Activated CD8-positive, alpha-beta memory T cell treated with anti-CD3 and anti-CD28 coated beads, Interleukin-2, amount 10 ng/mL, durations not matched to agents 7 days and 5 days (primary cell): ENCODE measurements at regions of chr2 and their contacts with region 1.

Region 1: DNA sequence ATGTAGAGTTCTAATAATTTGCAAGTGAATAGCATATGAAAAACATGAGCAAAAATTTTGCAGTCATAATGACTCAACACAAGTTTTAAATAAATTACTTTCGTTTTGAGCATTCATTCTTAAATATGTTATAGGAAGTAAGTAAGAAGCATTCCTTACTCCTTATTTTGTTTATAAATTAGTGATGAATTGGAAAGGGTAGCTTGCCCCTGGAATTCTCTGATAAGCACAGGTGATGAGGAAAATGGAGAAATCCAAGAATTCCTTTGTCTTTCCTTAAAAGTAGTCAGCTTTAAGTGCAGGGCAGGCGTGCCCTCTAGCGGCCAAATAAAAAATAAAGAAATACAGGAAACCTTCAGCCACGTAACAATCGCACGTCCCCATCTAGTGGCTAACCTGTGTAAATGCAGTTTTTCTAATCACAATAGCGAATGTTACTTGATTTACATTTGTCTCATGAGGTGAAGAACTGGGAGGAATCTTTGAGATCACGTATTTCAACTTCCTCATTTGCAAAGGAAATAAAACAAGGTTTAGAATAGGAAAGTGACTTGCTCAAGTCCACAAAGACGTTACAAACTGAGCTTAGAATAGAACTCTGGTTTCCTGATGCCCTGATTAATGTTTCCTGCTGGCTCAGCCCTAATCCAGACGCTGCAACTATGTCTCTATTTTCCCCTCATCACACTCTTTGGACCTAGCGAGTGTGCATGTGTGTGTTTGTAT is 47.2 kb upstream of the ZNG1B start:
- DNase-seq: peak; percentile 74
- ATAC-seq: peak; percentile 92
- H3K4me3 Mint-ChIP-seq: peak overlapping the region; percentile 62
- H3K27ac Mint-ChIP-seq: peak overlapping the region; percentile 74
- H3K4me1 Mint-ChIP-seq: peaks cover 13% of the 10 kb centered on the region
- H3K27me3 Mint-ChIP-seq: peaks cover 26% of the 10 kb centered on the region

Region 2: DNA sequence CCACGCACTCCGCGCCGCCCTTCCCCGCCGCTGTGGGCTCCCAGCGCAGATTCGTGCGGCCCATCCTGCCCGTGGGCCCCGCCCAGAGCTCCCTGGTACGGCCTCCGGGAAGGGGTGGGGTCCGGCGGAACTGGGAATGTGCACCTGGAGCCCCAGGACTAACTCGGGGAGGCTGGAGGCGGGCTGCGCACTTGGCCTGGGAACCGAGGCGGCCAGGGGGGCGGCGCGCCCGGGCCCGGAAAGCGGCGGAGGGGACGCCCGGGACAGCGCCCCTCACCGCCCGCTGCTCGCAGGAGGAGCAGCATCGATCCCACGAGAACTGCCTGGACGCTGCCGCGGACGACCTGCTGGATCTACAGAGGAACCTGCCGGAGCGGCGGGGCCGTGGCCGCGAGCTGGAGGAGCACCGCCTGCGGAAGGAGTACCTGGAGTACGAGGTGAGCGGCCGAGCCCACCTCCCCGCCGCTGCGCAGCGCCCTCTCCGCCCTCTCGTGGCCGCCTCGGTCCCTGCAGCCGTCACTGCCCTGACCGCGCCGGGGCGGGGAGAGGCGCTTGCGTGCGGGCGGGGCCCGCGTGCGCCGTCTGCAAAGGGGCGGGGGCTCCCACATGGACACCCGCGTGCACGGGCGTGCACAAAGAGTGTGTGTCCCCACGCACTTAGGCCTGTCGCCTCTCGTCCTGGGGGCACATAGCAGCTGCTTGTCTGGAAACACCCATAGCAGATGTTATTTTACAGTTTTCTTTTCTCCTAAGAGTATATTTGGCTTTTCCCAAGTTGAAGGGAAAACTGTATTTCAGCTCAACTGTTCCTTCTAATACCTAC is 191.3 kb before region 1 on chr2:
- CTCF ChIA-PET with region 1: interaction called, 38 read pairs
- DNase-seq: peak; percentile 85
- ATAC-seq: peak; percentile 81
- H3K4me3 Mint-ChIP-seq: no peak overlapping the region
- H3K27ac Mint-ChIP-seq: peak overlapping the region; percentile 47
- H3K4me1 Mint-ChIP-seq: peaks cover 53% of the 10 kb centered on the region
- H3K27me3 Mint-ChIP-seq: no peaks in the 10 kb centered on the region

Region 3: DNA sequence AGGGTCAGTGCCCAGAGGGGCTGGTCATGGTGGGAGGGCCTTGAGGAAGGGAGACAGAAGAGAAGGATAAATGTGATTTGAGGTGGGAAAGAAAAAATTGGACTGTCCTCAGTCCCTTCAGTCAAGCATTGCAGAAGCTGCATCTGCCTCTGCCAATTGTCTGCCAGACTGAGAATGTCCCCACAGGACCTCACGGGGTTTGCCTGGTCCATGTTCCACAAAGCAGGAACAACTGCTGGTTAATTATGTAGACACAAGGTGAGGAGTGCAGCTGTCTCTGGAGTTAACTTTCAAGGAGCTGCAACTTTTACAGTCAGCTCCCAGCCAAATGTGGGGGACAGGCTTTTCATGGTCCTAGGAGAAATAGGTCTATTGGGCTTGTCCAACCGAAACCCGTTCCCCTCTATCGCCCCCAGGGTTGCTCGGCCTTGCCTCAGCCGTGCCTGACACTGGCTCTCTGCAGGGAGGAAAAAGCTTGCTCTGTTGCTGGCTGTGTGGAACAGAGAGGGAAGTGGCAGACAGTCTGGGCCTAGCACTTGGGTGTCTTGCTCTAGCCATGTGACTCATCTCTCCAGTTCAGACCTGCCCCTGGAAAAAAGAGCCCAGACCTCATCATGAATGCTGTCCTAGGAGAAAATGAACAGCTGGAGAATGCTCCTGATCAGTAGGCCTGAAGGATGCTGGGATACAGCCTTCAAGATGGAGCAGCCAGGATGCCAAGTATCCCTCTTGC is 80.5 kb before region 1 on chr2:
- CTCF ChIA-PET with region 1: no interaction called
- DNase-seq: no peak
- ATAC-seq: no peak
- H3K4me3 Mint-ChIP-seq: no peak overlapping the region
- H3K27ac Mint-ChIP-seq: no peak overlapping the region
- H3K4me1 Mint-ChIP-seq: no peaks in the 10 kb centered on the region
- H3K27me3 Mint-ChIP-seq: peaks cover 42% of the 10 kb centered on the region

Region 4: DNA sequence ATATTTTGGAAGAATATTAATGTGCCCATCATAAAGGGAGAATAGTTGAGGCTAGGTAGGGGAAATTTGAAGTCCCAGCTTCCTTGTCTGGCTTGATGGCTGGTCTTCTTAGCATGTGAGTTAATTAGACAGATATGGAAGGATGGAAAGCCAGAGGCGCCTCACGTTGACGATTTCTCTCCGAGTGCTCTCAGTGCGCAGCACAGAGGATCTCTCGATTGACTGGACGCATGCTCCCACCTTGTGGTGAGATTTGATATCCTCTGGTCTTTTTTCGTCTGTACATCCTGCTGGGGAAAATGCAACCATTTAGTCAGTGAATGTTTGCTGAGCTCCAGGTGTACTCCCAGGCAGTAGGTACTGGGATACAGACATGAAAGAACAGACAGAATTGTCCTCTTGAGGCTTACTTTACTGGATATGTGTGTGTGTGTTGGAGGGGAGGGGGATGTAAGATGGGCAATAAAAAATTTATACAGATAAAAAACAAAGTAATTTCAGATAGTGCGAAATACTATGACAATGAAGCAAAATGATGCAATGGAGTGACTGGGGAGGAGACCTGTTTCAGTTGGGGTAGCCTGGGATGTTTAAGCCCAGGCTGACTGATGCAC is 19.7 kb before region 1 on chr2:
- CTCF ChIA-PET with region 1: interaction called, 22 read pairs
- DNase-seq: peak; percentile 86
- ATAC-seq: peak; percentile 99
- H3K4me3 Mint-ChIP-seq: no peak overlapping the region
- H3K27ac Mint-ChIP-seq: peak overlapping the region; percentile 66
- H3K4me1 Mint-ChIP-seq: peaks cover 21% of the 10 kb centered on the region
- H3K27me3 Mint-ChIP-seq: peaks cover 10% of the 10 kb centered on the region

Region 5: DNA sequence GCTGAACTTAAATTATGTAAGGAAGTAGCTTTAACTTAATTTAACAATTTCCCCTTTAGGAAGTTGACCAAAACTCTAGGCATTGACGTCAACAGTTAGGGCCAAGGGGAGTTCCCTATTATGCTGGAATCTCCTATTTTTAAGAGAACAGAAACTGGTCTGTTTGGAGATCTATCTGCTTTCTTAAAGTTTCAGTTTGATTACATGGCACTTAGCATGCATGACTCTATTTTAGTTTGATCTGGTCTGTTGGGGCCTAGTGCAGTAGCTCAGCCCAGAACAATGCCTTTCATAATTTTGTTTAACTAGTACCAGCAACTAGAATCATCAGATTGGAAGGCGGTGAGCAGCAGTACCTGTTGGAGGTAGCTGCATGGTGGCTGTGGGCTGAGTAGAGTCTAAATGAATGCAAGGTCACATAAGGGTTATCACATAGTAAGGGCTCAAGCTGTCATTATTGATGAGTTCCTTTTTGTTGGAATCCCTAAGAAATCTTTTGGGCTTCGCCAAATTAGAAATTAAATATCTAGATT is 13.3 kb before region 1 on chr2:
- CTCF ChIA-PET with region 1: interaction called, 22 read pairs
- DNase-seq: no peak
- ATAC-seq: no peak
- H3K4me3 Mint-ChIP-seq: no peak overlapping the region
- H3K27ac Mint-ChIP-seq: no peak overlapping the region
- H3K4me1 Mint-ChIP-seq: peaks cover 15% of the 10 kb centered on the region
- H3K27me3 Mint-ChIP-seq: peaks cover 18% of the 10 kb centered on the region

Region 6: DNA sequence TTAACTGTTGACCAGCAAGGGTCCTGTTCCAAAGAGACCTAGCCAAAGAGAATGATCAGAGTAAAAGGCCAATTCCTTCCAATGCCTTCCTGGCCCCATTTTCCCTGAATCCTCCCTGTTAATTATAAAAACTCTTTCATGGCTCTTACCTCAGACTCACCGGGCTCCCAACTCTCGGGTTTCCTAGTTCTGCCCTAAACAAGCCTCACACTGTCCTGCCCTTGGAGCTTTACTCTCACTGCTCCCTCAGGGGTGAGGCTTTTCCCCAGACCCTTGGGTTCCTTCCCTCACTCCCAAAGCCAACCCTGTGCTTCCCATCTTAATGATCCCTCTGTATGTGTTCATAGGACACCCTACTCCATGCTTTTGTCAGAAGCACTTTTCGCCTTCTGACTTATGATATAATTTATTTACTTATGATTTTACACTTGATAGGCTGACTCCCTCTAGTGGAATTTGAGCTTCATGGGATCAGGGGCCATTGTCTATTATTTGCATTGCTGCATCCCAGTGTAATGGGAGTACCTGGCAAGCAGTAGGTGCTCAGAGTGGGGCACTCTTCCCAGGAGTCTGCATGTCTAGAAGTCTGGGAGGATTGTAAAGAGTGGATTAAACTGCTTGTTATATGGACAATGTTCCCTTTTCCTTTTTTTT is 17.3 kb after region 1 on chr2:
- CTCF ChIA-PET with region 1: no interaction called
- DNase-seq: no peak
- ATAC-seq: no peak
- H3K4me3 Mint-ChIP-seq: no peak overlapping the region
- H3K27ac Mint-ChIP-seq: no peak overlapping the region
- H3K4me1 Mint-ChIP-seq: no peaks in the 10 kb centered on the region
- H3K27me3 Mint-ChIP-seq: peaks cover 46% of the 10 kb centered on the region